Activated CD4-positive, alpha-beta memory T cell treated with anti-CD3 and anti-CD28 coated beads, Interleukin-2, amount 10 ng/mL, durations not matched to agents 7 days and 5 days (primary cell): ENCODE measurements at regions of chr20 and their contacts with region 1.

Region 1: DNA sequence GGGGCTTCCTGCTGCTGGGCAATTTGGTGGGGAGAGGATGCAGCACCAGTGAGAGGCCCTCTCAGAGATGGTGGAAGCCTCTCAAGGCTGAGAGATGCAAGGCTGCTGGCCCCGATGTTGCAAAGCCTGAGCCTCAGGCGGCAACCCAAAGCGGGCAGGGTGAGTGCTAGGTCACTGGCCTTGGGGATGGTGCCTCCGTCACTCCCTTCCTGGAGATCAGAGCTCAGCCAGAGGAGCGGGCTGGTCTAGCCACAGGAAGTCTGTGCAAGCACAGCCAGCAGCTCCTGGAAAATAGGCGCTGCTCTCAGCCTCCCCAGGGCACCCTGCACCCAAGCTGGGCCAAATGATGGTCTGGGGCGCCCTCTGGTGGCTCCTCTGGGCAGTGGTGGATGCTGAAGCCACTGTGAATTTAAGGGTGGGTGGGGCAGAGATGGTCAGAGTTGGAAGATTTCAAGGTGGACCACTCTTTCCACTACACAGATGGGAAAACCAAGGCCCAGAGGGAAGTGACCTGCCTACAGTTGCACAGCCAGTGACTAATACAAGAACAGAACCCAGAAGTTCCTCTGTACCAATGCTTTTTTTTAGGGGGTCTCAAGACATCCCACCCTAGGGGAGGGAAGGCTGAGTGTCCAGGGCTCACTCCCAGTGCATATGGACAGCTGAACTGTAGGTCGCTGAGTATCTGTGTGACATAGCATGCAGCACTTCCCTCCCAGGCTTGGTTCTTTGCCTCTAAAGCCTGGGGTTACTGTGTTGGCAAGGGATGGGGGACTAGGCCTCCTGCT is 20.8 kb downstream of the C20orf203 start:
- DNase-seq: peak; percentile 89
- H3K4me3 Mint-ChIP-seq: no peak overlapping the region
- H3K27ac Mint-ChIP-seq: no peak overlapping the region
- H3K4me1 Mint-ChIP-seq: peaks cover 10% of the 10 kb centered on the region
- H3K27me3 Mint-ChIP-seq: peaks cover 2% of the 10 kb centered on the region

Region 2: DNA sequence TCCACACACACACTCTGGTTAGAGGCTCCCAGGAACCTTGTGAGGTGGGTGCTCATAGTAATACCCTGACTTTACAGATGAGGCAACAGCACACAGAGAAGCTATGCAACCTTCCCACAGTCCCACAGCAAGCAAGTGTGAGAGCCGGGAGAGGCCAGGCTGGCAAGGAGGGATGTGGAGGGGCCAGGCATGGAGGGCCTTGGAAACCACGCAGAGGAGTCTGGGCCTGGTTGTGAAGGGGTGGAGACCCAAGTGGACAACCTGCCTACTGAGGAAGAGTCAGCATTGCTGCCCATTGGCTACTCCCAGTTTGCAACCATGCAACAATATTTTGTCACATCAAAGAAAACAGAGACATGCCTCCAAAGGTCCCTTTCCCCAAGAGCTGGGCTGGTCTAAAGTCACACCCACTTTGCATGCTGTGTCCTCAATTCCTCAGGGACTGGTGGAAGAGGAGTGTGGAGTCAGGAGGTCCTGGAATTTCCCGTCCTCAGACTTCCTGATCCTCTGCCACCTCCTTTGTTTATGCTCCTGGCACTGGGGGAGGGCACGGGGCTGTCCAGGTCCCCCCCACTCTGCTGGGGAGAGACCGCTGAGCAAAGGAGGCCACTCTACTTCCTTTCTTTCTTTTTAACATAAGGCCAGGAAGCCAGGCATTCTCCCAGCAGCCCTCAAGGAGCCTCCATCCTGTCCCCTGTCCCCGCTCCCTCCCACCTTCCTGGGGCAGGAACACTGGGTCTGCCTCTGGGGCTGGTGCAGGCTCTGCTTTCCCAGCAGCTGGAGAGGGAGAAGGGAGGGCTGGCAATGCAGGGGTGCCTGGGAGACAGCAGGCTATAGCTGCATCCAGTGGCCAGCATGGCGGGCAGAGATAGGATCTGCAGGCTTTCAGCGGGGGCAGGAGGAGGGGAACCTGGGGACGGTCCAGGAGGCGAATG is 136.1 kb before region 1 on chr20:
- CTCF ChIA-PET with region 1: interaction called, 164 read pairs
- POLR2A ChIA-PET with region 1: interaction called, 14 read pairs
- DNase-seq: no peak
- H3K4me3 Mint-ChIP-seq: no peak overlapping the region
- H3K27ac Mint-ChIP-seq: no peak overlapping the region
- H3K4me1 Mint-ChIP-seq: peaks cover 13% of the 10 kb centered on the region
- H3K27me3 Mint-ChIP-seq: no peaks in the 10 kb centered on the region

Region 3: GRCh38 chr20:32521780-32522525 is 131.0 kb before region 1 on chr20:
- CTCF ChIA-PET with region 1: interaction called, 164 read pairs
- POLR2A ChIA-PET with region 1: interaction called, 14 read pairs
- DNase-seq: peak; percentile 69
- H3K4me3 Mint-ChIP-seq: no peak overlapping the region
- H3K27ac Mint-ChIP-seq: peak overlapping the region; percentile 70
- H3K4me1 Mint-ChIP-seq: peaks cover 43% of the 10 kb centered on the region
- H3K27me3 Mint-ChIP-seq: no peaks in the 10 kb centered on the region